Activated CD4-positive, alpha-beta memory T cell treated with anti-CD3 and anti-CD28 coated beads for 36 hours (primary cell): ENCODE measurements at regions of chr5 and their contacts with region 1.

Region 1: DNA sequence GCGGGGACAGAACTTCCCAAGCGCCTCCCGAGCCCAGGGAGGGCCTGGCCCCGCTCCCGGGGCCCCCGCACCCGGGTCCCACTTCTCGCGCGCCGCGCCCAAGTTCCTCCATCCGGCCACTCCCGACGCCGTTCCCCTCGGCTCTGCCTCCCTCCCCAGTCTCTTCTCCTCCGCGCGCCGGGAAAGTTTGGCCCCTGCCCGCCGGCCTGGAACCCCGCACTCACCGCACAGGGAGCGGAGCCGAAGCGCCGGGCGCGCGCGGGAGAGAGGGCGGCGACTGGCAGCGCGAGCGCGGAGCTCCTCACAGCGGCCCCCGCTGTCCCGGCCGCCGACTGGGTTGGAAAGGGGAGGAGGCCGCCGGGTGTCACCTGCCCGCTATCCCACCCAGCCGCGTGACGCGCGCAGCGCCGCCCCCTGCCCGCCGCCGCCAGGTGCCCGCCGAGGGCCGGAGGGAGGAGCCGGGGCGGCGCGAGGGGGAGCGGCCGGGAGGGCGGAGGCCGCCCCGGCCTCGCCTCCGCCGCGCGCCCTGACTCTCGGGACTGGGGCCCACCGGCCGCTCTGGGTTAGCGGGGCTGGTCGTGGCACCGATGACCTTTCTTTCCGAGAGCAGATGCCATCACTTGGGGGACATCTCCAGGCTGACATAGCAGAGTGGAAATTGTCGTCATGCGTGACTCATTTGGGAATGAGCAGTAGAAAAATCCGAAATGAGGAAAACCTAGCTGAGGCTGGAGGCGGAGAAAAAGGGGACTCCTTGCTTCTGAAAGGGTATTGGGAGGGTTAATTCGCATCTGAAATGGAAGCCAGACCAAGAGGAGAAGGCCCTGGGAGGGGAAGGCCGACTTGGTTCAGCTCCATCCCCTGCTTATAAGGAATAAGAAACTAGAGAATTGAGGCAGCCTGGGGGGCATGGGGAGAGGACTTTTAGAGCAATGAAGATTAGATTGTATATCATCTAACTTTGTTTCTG is at the start of gene ELOVL7:
- DNase-seq: peak; percentile 68
- H3K4me3 Mint-ChIP-seq: peak within 1 kb of the TSS; percentile 75
- H3K27ac Mint-ChIP-seq: no peak within 1 kb of the TSS
- H3K4me1 Mint-ChIP-seq: peaks cover 11% of the 10 kb centered on the region
- H3K27me3 Mint-ChIP-seq: peaks cover 46% of the 10 kb centered on the region
- total RNA-seq, gene ELOVL7: 0.34 to 0.38 TPM

Region 2: GRCh38 chr5:60699530-60700382 is 144.5 kb before region 1 on chr5 and contains the start of gene DEPDC1B:
- CTCF ChIA-PET with region 1: no interaction called
- POLR2A ChIA-PET with region 1: interaction called, 6 read pairs
- intact Hi-C with region 1: loop called (anchors 1 kb)
- DNase-seq: peak; percentile 93
- H3K4me3 Mint-ChIP-seq: peak within 1 kb of the TSS; percentile 87
- H3K27ac Mint-ChIP-seq: peak within 1 kb of the TSS; percentile 72
- H3K4me1 Mint-ChIP-seq: peaks cover 18% of the 10 kb centered on the region
- H3K27me3 Mint-ChIP-seq: no peaks in the 10 kb centered on the region
- total RNA-seq, gene DEPDC1B: 33.2 to 33.6 TPM